ENCODE measurements at regions of chr11 and their contacts with region 1.

Region 1: DNA sequence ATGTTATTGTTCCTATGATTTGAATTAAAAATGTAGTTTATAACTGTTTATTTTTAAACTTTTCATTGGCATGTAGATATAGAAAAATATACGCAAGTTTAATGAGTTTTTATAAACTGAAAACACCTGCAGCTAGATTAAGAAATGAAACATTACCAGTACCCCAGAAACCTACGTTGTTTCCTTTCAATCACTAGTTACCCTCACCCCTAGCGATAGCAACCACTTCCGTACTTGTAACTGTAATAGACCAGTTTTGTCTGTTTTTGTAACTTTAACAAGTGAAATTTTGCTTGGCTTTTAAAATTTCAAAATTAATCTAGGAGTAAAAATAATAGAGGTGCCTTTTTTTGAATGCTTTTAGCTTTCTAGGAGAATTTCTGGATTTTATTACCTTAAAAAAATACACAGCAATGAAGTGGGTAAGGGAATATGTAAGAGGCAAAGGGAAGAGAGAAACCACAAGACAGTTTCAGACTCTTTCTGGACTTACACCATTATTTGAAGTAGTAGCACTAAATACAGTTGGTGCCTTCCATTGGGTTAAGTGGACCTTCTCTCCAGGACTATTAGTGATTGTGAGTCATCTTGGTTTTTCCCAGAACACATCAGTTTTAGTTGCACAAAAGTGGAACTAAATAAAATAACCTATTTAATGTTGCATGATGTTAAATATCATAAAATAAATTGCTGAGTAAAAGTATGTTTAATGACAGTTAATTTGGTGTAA is 18.7 kb upstream of the NAT10 start:
- DNase-seq: no peak
- H3K4me3 ChIP-seq: no peak overlapping the region
- H3K27ac ChIP-seq: no peak overlapping the region
- H3K4me1 ChIP-seq: no peaks in the 10 kb centered on the region
- H3K27me3 ChIP-seq: no peaks in the 10 kb centered on the region
- CTCF ChIP-seq: no peak
- EP300 ChIP-seq: no peak
- POLR2A ChIP-seq: no peak
- RAD21 ChIP-seq: no peak

Region 2: GRCh38 chr11:34075178-34075820 is 11.4 kb before region 1 on chr11:
- CTCF ChIA-PET with region 1: interaction called, 4 read pairs
- POLR2A ChIA-PET with region 1: interaction called, 13 read pairs
- DNase-seq: no peak
- H3K4me3 ChIP-seq: no peak overlapping the region
- H3K27ac ChIP-seq: no peak overlapping the region
- H3K4me1 ChIP-seq: no peaks in the 10 kb centered on the region
- H3K27me3 ChIP-seq: no peaks in the 10 kb centered on the region
- CTCF ChIP-seq: no peak
- EP300 ChIP-seq: no peak
- POLR2A ChIP-seq: no peak
- RAD21 ChIP-seq: no peak

Region 3: DNA sequence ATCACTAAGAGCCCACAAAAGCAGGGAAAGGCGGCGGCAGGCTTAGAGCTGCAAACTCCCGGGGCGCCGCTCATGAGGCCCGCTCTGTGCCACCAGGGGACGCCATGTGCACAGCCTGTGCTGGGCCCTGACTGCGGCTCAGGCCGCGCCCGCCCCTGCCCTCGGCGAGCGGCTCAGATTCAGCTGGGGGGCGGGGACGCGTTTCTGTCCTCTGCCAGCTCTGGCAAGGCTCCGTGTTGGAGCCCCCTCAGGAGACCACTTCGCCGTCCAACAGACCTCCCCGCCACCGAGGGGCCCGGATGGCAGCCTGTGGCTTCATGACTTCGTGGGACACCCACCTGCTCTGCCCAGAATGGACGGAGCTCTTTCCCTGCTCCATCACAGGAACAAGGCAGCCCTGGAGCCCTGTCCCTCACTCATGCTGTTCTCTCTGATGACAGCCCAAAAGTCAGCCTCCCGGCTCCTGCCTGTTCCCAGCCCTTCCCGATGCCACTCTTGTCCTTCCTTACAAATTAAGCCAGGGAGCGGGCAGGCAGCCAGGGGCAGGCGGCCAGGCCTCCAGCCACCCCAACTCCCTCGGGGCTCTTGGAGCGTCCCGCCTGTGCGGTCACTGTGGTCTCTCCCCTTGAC is 87.8 kb after region 1 on chr11:
- CTCF ChIA-PET with region 1: no interaction called
- POLR2A ChIA-PET with region 1: no interaction called
- DNase-seq: peak; percentile 50 to 92
- H3K4me3 ChIP-seq: peak overlapping the region in 3 of 4 experiments; percentile 36 to 54 (median 42); a peak in 6 of 8 replicates
- H3K27ac ChIP-seq: no peak overlapping the region
- H3K4me1 ChIP-seq: peaks cover 0 to 4% (median 0%) of the 10 kb centered on the region in 4 experiments; a peak in 4 of 7 replicates
- H3K27me3 ChIP-seq: no peaks in the 10 kb centered on the region
- CTCF ChIP-seq: peak; percentile 92 to 97 (median 94)
- EP300 ChIP-seq: peak in 1 of 2 experiments; percentile 27; a peak in 1 of 3 replicates
- POLR2A ChIP-seq: no peak
- RAD21 ChIP-seq: peak; percentile 98 to 99

Region 4: GRCh38 chr11:34284811-34285344 is 198.2 kb after region 1 on chr11:
- CTCF ChIA-PET with region 1: no interaction called
- POLR2A ChIA-PET with region 1: no interaction called
- DNase-seq: no peak
- H3K4me3 ChIP-seq: no peak overlapping the region
- H3K27ac ChIP-seq: no peak overlapping the region
- H3K4me1 ChIP-seq: no peaks in the 10 kb centered on the region
- H3K27me3 ChIP-seq: no peaks in the 10 kb centered on the region
- CTCF ChIP-seq: no peak
- EP300 ChIP-seq: no peak
- POLR2A ChIP-seq: no peak
- RAD21 ChIP-seq: no peak

Measured in H1 (cell line).